Heart right ventricle (tissue), 16 donors: ENCODE measurements at regions of chr12 and their contacts with region 1.

Region 1: GRCh38 chr12:105164068-105164467 is 56.5 kb downstream of the WASHC4 start:
- DNase-seq: no peak
- ATAC-seq: no peak
- H3K4me3 ChIP-seq: no peak overlapping the region
- H3K27ac ChIP-seq: no peak overlapping the region
- H3K4me1 ChIP-seq: no peaks in the 10 kb centered on the region
- H3K27me3 ChIP-seq: no peaks in the 10 kb centered on the region
- CTCF ChIP-seq: no peak

Region 2: GRCh38 chr12:104201238-104202001 is 962.6 kb before region 1 on chr12:
- intact Hi-C with region 1: no loop called
- DNase-seq: peak in 1 of 2 donors; percentile 47
- ATAC-seq: peak; percentile 59 to 87 (median 76)
- H3K4me3 ChIP-seq: no peak overlapping the region
- H3K27ac ChIP-seq: no peak overlapping the region
- H3K4me1 ChIP-seq: no peaks in the 10 kb centered on the region
- H3K27me3 ChIP-seq: no peaks in the 10 kb centered on the region
- CTCF ChIP-seq: peak; percentile 60 to 89 (median 85)

Region 3: GRCh38 chr12:105109465-105110212 is 54.4 kb before region 1 on chr12:
- intact Hi-C with region 1: loop called in 1 of 10 experiments (anchors 10 kb)
- DNase-seq: no peak
- ATAC-seq: no peak
- H3K4me3 ChIP-seq: peak overlapping the region in 8 of 10 donors; percentile 73 to 91 (median 81)
- H3K27ac ChIP-seq: peak overlapping the region in 6 of 10 donors; percentile 11 to 99 (median 94)
- H3K4me1 ChIP-seq: peaks cover 0 to 70% (median 43%) of the 10 kb centered on the region in 9 donors
- H3K27me3 ChIP-seq: peaks cover 0 to 17% (median 0%) of the 10 kb centered on the region in 7 donors
- CTCF ChIP-seq: no peak